ENCODE measurements at regions of chr11 and their contacts with region 1.

Region 1: DNA sequence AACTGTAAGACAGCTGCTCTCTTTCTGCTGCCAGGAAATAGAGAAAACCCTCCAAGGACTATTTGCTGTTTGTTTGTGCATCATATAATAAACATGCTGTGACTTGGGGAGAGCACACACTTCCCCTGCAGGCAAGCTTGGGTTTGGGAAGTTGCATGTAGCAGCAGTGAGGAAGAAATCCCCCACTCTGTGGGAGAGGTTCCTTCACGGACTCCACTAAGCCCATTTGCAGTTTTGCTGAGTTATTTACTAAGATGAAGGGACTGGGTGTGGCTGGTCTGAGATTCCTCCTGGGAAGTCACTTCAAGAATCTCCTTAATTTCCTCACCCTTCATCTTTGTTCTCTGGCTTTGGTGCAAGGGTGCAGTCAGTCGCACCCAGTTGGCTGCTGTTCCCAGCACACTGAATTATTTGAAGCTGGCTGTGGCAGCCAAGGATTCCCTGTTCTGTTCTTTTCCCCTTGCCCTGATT is 104.9 kb downstream of the ARFGAP2 start:
- DNase-seq: no peak
- ATAC-seq: no peak
- H3K4me3 ChIP-seq: no peak overlapping the region
- H3K27ac ChIP-seq: no peak overlapping the region
- H3K4me1 ChIP-seq: peaks cover 6% of the 10 kb centered on the region
- H3K27me3 ChIP-seq: no peaks in the 10 kb centered on the region
- CTCF ChIP-seq: no peak

Region 2: GRCh38 chr11:45798793-45799441 is 1272.9 kb before region 1 on chr11:
- CTCF ChIA-PET with region 1: no interaction called
- POLR2A ChIA-PET with region 1: interaction called, 10 read pairs
- intact Hi-C with region 1: no loop called
- DNase-seq: no peak
- ATAC-seq: no peak
- H3K4me3 ChIP-seq: no peak overlapping the region
- H3K27ac ChIP-seq: no peak overlapping the region
- H3K4me1 ChIP-seq: no peaks in the 10 kb centered on the region
- H3K27me3 ChIP-seq: peaks cover 4% of the 10 kb centered on the region; the same call in 1 of the 2 replicates
- CTCF ChIP-seq: no peak

Region 3: GRCh38 chr11:46991391-46991790 is 80.4 kb before region 1 on chr11:
- CTCF ChIA-PET with region 1: no interaction called
- POLR2A ChIA-PET with region 1: no interaction called
- intact Hi-C with region 1: no loop called
- DNase-seq: no peak
- ATAC-seq: no peak
- H3K4me3 ChIP-seq: no peak overlapping the region
- H3K27ac ChIP-seq: no peak overlapping the region
- H3K4me1 ChIP-seq: no peaks in the 10 kb centered on the region
- H3K27me3 ChIP-seq: no peaks in the 10 kb centered on the region
- CTCF ChIP-seq: no peak

Region 4: GRCh38 chr11:47143322-47143721 is 71.5 kb after region 1 on chr11:
- CTCF ChIA-PET with region 1: no interaction called
- POLR2A ChIA-PET with region 1: no interaction called
- intact Hi-C with region 1: no loop called
- DNase-seq: peak; percentile 55
- ATAC-seq: peak; percentile 64
- H3K4me3 ChIP-seq: no peak overlapping the region
- H3K27ac ChIP-seq: no peak overlapping the region
- H3K4me1 ChIP-seq: 0 out of 2 replicates have a peak, but pooled peaks cover 5% of the 10 kb centered on the region
- H3K27me3 ChIP-seq: no peaks in the 10 kb centered on the region
- CTCF ChIP-seq: no peak